Left colon (tissue), 2 donors: ENCODE measurements at regions of chr15 and their contacts with region 1.

Region 1: DNA sequence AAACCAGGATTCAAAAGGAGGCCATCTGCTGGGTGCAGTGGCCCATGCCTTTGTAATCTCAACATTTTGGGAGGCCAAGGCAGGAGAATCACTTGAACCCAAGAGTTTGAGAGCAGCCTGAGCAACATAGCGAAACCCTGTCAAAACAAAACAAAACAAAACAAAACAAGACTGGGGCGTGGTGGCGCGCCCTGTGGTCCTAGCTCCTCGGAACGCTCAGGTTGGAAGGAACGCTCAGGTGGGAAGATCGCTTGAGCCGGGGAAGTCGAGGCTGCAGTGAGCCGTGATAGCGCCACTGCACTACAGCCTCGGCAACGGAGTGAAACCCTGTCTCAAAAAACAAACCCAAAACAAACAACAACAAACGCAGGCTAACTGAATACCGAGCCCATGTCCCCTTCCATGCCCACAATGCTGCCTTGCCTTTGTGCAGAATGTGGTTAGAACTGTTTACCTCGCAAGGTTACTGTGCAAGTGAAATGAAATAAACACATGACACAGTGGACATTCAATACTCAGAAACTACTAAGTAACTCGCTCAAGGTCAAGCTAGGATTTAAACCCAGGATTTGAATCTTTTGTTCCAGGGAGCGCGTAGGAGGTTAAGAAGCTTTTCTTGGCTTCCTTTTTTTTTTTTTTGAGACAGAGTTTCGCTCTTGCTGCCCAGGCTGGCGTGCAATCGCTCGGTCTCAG is 766 bp upstream of the EMC4 start:
- DNase-seq: peak in 1 of 2 donors; percentile 11
- ATAC-seq: peak; percentile 36

Region 2: DNA sequence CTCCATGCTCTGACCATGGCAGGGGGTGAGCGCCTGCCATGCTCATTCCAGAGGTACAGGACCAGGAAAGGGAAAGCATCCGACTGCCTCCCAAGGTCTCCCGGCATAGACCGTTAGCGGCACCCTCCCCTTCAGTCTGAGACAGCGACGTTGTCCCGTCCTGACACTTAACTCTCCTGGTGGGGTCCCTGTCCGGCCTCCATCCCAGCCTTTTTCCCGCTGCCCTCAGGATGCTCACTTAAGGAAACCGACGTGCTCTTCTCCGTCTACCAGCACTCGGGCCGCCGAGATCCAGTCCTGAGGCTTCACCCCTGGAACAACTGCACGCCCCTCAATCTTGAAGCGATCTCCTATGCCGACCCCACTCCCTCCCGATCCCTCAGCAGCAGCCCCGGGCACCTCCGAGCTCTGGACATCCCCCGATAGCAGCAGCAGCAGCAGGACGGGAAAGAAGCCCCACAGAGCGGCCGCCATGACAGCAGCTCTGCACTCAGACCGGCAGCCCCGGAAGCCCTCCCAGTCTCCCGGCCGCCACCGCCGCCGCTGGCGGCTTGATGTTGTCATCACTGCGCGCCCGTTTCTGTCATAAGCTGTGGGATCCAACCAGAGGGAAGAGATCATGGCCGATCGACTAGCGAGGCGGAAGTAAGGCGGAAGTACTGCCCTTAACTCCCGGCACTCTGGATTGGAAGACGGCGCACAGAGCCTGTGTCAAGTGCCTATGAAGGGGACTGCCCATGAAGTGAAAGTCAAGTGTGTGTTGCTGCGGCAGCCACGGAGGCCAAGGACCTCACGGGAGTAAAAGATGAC is 122.5 kb before region 1 on chr15 and contains the starts of genes EMC7 and PGBD4:
- intact Hi-C with region 1: loop called in 1 of 2 experiments (anchors 5 kb)
- DNase-seq: peak; percentile 99
- ATAC-seq: peak; percentile 99
- total RNA-seq, gene EMC7: 66.3 to 67.4 TPM
- total RNA-seq, gene PGBD4: 1.3 to 1.4 TPM